Right cardiac atrium (tissue), 5 donors: ENCODE measurements at regions of chr9 and their contacts with region 1.

Region 1: GRCh38 chr9:131046581-131047202 is 37.7 kb downstream of the LAMC3 start:
- DNase-seq: peak; percentile 73 to 90 (median 85)
- ATAC-seq: peak; percentile 77 to 84
- H3K4me3 ChIP-seq: no peak overlapping the region
- H3K27ac ChIP-seq: no peak overlapping the region
- H3K4me1 ChIP-seq: no peaks in the 10 kb centered on the region
- H3K27me3 ChIP-seq: no peaks in the 10 kb centered on the region

Region 2: GRCh38 chr9:131008909-131009618 is 37.6 kb before region 1 on chr9 and contains the start of gene LAMC3:
- intact Hi-C with region 1: loop called in 1 of 4 experiments (anchors 2 kb)
- DNase-seq: peak in 1 of 3 donors; percentile 36
- ATAC-seq: peak; percentile 48 to 49
- H3K4me3 ChIP-seq: peak within 1 kb of the TSS; percentile 40
- H3K27ac ChIP-seq: no peak within 1 kb of the TSS
- H3K4me1 ChIP-seq: no peaks in the 10 kb centered on the region
- H3K27me3 ChIP-seq: no peaks in the 10 kb centered on the region
- total RNA-seq, gene LAMC3: 0.51 to 2.6 (median 1.5) TPM